Right ventricle myocardium inferior (tissue), 1 donor: ENCODE measurements at regions of chr15 and their contacts with region 1.

Region 1: GRCh38 chr15:78077058-78077877 is at the start of gene TBC1D2B:
- DNase-seq: peak; percentile 91
- ATAC-seq: peak; percentile 68
- total RNA-seq, gene TBC1D2B: 12.2 TPM

Region 2: GRCh38 chr15:78000091-78000926 is 77.0 kb before region 1 on chr15:
- intact Hi-C with region 1: loop called (anchors 5 kb)
- DNase-seq: peak; percentile 94
- ATAC-seq: peak; percentile 49

Region 3: GRCh38 chr15:78023865-78024518 is 53.3 kb before region 1 on chr15:
- intact Hi-C with region 1: loop called (anchors 5 kb)
- DNase-seq: peak; percentile 84
- ATAC-seq: peak; percentile 95

Region 4: GRCh38 chr15:78034495-78035191 is 42.6 kb before region 1 on chr15:
- intact Hi-C with region 1: loop called (anchors 5 kb)
- DNase-seq: peak; percentile 73
- ATAC-seq: no peak